ENCODE measurements at regions of chr14 and their contacts with region 1.

Region 1: DNA sequence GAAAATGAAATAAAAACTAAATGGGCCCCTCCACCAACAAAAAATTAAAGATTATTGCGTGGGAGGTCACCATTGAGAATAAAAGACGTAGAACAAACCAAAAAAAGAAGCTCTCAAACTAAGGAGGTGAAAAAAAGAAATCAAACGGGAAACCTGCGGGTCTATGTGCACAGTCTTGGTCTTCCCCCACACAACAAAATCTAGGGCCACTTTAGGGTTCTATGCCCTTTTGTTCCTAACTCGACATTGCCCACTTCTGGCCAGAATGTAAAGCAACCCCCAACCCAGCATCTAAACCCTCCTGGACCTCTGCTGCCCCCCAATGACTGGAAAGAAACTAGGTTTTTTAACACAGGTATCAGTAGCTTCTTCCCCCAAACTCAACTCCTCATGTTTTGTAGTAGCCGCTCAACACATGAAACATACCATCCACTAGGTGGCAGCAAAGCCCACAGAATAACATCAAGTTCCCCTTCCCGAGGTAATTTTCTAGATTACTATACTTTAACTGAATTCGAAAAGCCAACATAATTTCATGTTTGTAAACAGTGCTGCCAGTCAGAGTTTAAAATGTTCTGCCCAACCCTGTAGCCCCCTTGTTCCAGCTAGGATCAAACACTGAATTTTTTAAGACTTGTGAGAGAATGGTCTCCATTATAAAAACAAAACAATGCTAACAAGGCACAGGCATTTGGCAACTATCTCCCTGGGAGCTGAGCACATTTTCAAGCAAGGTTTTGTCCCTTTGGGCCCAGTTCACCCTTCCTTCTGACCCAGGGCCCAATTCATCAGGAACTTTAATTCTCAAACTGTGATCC is 18.7 kb downstream of the DAD1 start:
- DNase-seq: peak; percentile 99
- ATAC-seq: peak; percentile 72
- H3K4me3 ChIP-seq: peak overlapping the region; percentile 30
- H3K27ac ChIP-seq: peak overlapping the region; percentile 97
- H3K4me1 ChIP-seq: peaks cover 43% of the 10 kb centered on the region
- H3K27me3 ChIP-seq: no peaks in the 10 kb centered on the region
- CTCF ChIP-seq: peak; percentile 98 to 100 (median 100); a peak in 5 of 6 replicates
- EP300 ChIP-seq: no peak
- POLR2A ChIP-seq: no peak
- RAD21 ChIP-seq: peak; percentile 99

Region 2: GRCh38 chr14:22221508-22221907 is 348.8 kb before region 1 on chr14:
- CTCF ChIA-PET with region 1: interaction called, 11 read pairs
- POLR2A ChIA-PET with region 1: no interaction called
- RAD21 ChIA-PET with region 1: interaction called, 5 read pairs
- SMC1A ChIA-PET with region 1: interaction called, 3 read pairs
- in situ Hi-C with region 1: no loop called
- intact Hi-C with region 1: no loop called
- DNase-seq: no peak
- ATAC-seq: peak; percentile 58
- H3K4me3 ChIP-seq: no peak overlapping the region
- H3K27ac ChIP-seq: no peak overlapping the region
- H3K4me1 ChIP-seq: no peaks in the 10 kb centered on the region
- H3K27me3 ChIP-seq: no peaks in the 10 kb centered on the region; a peak in 2 of 4 replicates
- CTCF ChIP-seq: peak; percentile 31 to 49 (median 43); a peak in 4 of 6 replicates
- EP300 ChIP-seq: no peak
- POLR2A ChIP-seq: no peak
- RAD21 ChIP-seq: peak; percentile 25; the same call in 1 of the 2 replicates

Region 3: DNA sequence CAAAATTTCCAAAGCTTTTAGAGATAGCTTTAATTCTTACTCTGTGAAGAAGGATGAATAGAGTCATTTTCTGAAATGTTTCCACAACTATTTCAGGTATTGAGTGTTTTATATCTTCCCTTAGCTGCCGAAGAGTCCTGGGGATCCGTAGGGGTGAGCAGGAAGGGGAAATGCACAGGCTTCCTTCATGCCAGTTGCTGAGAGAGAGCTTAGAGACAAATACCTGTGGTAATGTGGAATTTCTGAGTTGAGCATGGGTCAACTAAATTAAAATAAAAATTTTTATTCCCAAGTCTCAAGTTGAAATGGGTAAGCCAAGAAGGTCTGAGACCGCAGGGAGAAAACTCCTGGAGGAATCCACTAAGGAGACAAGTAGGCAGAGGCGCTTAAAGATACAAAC is 167.1 kb before region 1 on chr14:
- CTCF ChIA-PET with region 1: no interaction called
- POLR2A ChIA-PET with region 1: no interaction called
- RAD21 ChIA-PET with region 1: no interaction called
- SMC1A ChIA-PET with region 1: no interaction called
- in situ Hi-C with region 1: no loop called
- intact Hi-C with region 1: no loop called
- DNase-seq: no peak
- ATAC-seq: no peak
- H3K4me3 ChIP-seq: no peak overlapping the region
- H3K27ac ChIP-seq: no peak overlapping the region
- H3K4me1 ChIP-seq: no peaks in the 10 kb centered on the region
- H3K27me3 ChIP-seq: peaks cover 0 to 3% of the 10 kb centered on the region in 2 experiments; a peak in 2 of 4 replicates
- CTCF ChIP-seq: no peak
- EP300 ChIP-seq: no peak
- POLR2A ChIP-seq: no peak
- RAD21 ChIP-seq: no peak

Region 4: DNA sequence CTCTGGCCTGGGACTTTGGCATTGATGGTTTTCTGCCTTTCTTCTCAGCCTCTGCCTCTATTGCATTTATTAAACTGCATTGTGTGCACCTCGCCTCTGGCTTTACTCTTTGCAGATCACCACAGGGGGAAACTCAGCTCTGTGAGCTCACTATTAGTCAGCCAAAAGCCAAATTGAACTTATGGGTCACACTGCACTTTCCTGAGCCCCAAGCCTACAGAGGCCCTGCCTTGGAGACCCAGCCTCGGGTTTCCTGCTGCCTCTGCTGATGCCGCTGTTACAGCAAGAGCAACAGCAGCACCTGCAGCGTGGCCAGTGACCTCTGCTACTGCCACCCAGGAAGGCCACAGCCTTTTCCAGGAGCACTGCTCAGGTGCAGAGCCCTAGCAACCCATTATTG is 103.8 kb before region 1 on chr14:
- CTCF ChIA-PET with region 1: interaction called, 236 read pairs
- POLR2A ChIA-PET with region 1: interaction called, 4 read pairs
- RAD21 ChIA-PET with region 1: interaction called, 171 read pairs
- SMC1A ChIA-PET with region 1: interaction called, 58 read pairs
- in situ Hi-C with region 1: no loop called
- intact Hi-C with region 1: no loop called
- DNase-seq: no peak
- ATAC-seq: peak; percentile 71
- H3K4me3 ChIP-seq: no peak overlapping the region
- H3K27ac ChIP-seq: peak overlapping the region; percentile 86
- H3K4me1 ChIP-seq: peaks cover 52% of the 10 kb centered on the region
- H3K27me3 ChIP-seq: no peaks in the 10 kb centered on the region
- CTCF ChIP-seq: 0 out of 6 replicates have a peak, but pooled peaks of 1 of the 3 experiments have one; percentile 12
- EP300 ChIP-seq: no peak
- POLR2A ChIP-seq: no peak
- RAD21 ChIP-seq: peak; percentile 40; the same call in 1 of the 2 replicates

Region 5: GRCh38 chr14:22505697-22506377 is 64.5 kb before region 1 on chr14:
- CTCF ChIA-PET with region 1: interaction called, 16 read pairs
- POLR2A ChIA-PET with region 1: interaction called, 4 read pairs
- RAD21 ChIA-PET with region 1: interaction called, 83 read pairs
- SMC1A ChIA-PET with region 1: interaction called, 27 read pairs
- in situ Hi-C with region 1: no loop called
- intact Hi-C with region 1: no loop called
- DNase-seq: no peak
- ATAC-seq: peak; percentile 29
- H3K4me3 ChIP-seq: peak overlapping the region; percentile 68
- H3K27ac ChIP-seq: peak overlapping the region; percentile 98
- H3K4me1 ChIP-seq: peaks cover 50% of the 10 kb centered on the region
- H3K27me3 ChIP-seq: no peaks in the 10 kb centered on the region
- CTCF ChIP-seq: no peak
- EP300 ChIP-seq: peak in 1 of 2 experiments; percentile 49; a peak in 1 of 4 replicates
- POLR2A ChIP-seq: peak; percentile 60; the same call in 1 of the 2 replicates
- RAD21 ChIP-seq: 0 out of 2 replicates have a peak, but pooled peaks have one; percentile 8

Region 6: GRCh38 chr14:22598099-22598899 is 28.0 kb after region 1 on chr14 and contains the start of gene ABHD4:
- CTCF ChIA-PET with region 1: interaction called, 48 read pairs
- POLR2A ChIA-PET with region 1: interaction called, 7 read pairs
- RAD21 ChIA-PET with region 1: interaction called, 53 read pairs
- SMC1A ChIA-PET with region 1: interaction called, 22 read pairs
- in situ Hi-C with region 1: no loop called
- intact Hi-C with region 1: no loop called
- DNase-seq: no peak
- ATAC-seq: peak; percentile 97
- H3K4me3 ChIP-seq: peak within 1 kb of the TSS; percentile 94
- H3K27ac ChIP-seq: peak within 1 kb of the TSS; percentile 45
- H3K4me1 ChIP-seq: peaks cover 19% of the 10 kb centered on the region
- H3K27me3 ChIP-seq: no peaks in the 10 kb centered on the region
- CTCF ChIP-seq: no peak
- EP300 ChIP-seq: no peak
- POLR2A ChIP-seq: peak; percentile 62; the same call in 1 of the 2 replicates
- RAD21 ChIP-seq: no peak
- polyA plus RNA-seq, gene ABHD4: 7.7 to 7.9 TPM

Region 7: DNA sequence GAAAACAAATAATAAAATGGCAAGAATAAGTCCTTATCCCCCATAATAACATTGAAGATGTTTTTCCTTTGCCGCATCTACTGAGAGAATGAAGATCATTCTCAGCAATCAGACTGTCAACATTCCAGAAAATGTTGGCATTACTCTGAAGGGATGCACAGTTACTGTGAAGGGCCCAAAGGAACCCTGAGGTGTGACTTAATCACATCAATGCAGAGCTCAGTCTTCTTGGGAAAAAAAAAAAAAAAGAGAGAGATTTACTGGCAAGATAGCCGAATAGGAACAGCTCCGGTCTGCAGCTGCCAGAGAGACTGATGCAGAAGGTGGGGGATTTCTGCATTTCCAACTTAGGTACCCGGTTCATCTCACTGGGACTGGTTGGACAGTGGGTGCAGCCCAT is 115.1 kb after region 1 on chr14:
- CTCF ChIA-PET with region 1: no interaction called
- POLR2A ChIA-PET with region 1: no interaction called
- RAD21 ChIA-PET with region 1: no interaction called
- SMC1A ChIA-PET with region 1: no interaction called
- in situ Hi-C with region 1: no loop called
- intact Hi-C with region 1: no loop called
- DNase-seq: no peak
- ATAC-seq: no peak
- H3K4me3 ChIP-seq: no peak overlapping the region
- H3K27ac ChIP-seq: no peak overlapping the region
- H3K4me1 ChIP-seq: no peaks in the 10 kb centered on the region
- H3K27me3 ChIP-seq: no peaks in the 10 kb centered on the region
- CTCF ChIP-seq: no peak
- EP300 ChIP-seq: no peak
- POLR2A ChIP-seq: no peak
- RAD21 ChIP-seq: no peak

Region 8: DNA sequence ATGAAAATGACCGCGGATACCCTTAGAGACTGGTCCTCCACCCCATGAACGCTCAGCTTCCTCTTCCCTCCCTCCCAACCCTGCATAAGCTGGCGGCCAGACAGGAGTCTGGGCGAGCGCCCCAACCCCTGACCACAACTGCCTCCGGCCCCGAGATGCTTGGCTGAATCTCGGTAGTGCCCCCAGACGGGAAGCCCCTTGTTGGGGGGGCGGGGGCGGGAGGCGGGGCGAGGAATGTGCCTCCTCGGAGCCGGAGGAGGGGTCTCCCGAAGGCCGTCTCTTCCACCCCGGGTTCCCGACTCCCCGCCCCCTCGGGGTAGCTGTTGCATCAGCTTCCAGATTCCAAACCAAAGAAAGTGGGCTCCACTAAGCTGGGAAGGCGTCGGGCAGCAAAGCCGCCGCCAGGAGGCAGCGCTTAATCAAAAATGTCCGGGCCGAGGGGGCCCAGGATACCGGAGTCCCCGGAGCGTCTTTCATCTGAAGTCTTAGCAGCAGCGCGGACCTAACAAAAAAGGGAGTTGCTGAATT is 252.3 kb after region 1 on chr14:
- CTCF ChIA-PET with region 1: interaction called, 17 read pairs
- POLR2A ChIA-PET with region 1: no interaction called
- RAD21 ChIA-PET with region 1: interaction called, 17 read pairs
- SMC1A ChIA-PET with region 1: interaction called, 17 read pairs
- in situ Hi-C with region 1: no loop called
- intact Hi-C with region 1: no loop called
- DNase-seq: no peak
- ATAC-seq: peak; percentile 78
- H3K4me3 ChIP-seq: peak overlapping the region; percentile 74
- H3K27ac ChIP-seq: peak overlapping the region; percentile 48
- H3K4me1 ChIP-seq: peaks cover 34% of the 10 kb centered on the region
- H3K27me3 ChIP-seq: no peaks in the 10 kb centered on the region
- CTCF ChIP-seq: peak; percentile 73 to 77 (median 76)
- EP300 ChIP-seq: 0 out of 4 replicates have a peak, but pooled peaks of 1 of the 2 experiments have one; percentile 25
- POLR2A ChIP-seq: no peak; the same call in 1 of the 2 replicates
- RAD21 ChIP-seq: peak; percentile 86

Region 9: GRCh38 chr14:23057757-23058653 is 487.7 kb after region 1 on chr14:
- CTCF ChIA-PET with region 1: interaction called, 8 read pairs
- POLR2A ChIA-PET with region 1: no interaction called
- RAD21 ChIA-PET with region 1: interaction called, 3 read pairs
- SMC1A ChIA-PET with region 1: no interaction called
- in situ Hi-C with region 1: no loop called
- intact Hi-C with region 1: loop called (anchors 5 kb)
- DNase-seq: peak; percentile 40
- ATAC-seq: peak; percentile 82
- H3K4me3 ChIP-seq: peak overlapping the region; percentile 79
- H3K27ac ChIP-seq: no peak overlapping the region
- H3K4me1 ChIP-seq: peaks cover 12% of the 10 kb centered on the region
- H3K27me3 ChIP-seq: no peaks in the 10 kb centered on the region
- CTCF ChIP-seq: peak; percentile 92 to 97 (median 96); a peak in 5 of 6 replicates
- EP300 ChIP-seq: no peak
- POLR2A ChIP-seq: peak; percentile 74
- RAD21 ChIP-seq: peak; percentile 78

Measured in GM12878 (cell line).